ENCODE measurements at regions of chr9 and their contacts with region 1.

Region 1: DNA sequence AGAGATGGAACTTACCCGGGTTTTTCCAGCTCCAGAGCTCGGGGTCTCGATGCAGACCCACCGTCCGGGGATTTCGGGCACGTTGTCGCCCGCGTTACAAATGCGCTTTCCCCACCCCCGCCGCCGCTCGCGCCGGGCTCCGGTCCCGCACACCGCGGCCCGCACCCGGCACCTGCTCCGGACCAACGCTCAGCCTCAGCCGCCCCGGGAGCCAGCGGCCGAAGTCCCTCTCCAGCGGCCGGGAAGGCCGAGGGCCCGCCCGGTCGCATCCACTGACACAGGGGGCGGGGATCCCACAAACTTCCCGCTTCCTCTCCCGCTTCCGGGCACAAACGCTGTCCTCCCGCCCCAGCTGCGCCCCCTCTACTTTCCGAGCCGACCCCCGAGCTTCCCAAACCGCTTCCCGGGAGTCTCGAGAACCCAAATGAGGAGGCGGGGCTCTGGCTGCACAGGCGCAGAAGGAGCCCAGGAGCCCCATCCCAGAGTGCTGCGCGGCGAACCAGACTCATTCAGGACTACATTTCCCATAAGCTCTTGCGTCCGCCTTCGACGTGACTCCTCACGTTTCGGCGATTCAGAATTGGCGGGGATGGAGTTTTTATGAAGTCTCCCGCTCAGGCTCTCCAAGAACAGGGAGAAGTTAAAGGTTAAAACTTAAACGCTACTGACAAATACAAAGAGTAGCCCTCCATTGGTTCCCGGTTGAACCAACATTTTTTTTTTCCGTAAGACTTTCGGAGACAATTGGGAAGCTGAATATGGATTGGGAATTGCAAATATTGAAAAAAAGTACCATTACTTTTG is at the start of gene ZNF782:
- DNase-seq: peak; percentile 62 to 93 (median 83)
- ATAC-seq: peak; percentile 79
- H3K4me3 ChIP-seq: peak within 1 kb of the TSS; percentile 91 to 97
- H3K4me3 Mint-ChIP-seq: peak within 1 kb of the TSS; percentile 100
- H3K27ac ChIP-seq: peak within 1 kb of the TSS; percentile 52 to 74
- H3K27ac Mint-ChIP-seq: peak within 1 kb of the TSS; percentile 99
- H3K4me1 ChIP-seq: peaks cover 29% of the 10 kb centered on the region
- H3K4me1 Mint-ChIP-seq: peaks cover 52% of the 10 kb centered on the region
- H3K27me3 ChIP-seq: no peaks in the 10 kb centered on the region
- H3K27me3 Mint-ChIP-seq: peaks cover 4% of the 10 kb centered on the region
- CTCF ChIP-seq: no peak
- total RNA-seq, gene ZNF782: 2.6 to 3.6 TPM

Region 2: DNA sequence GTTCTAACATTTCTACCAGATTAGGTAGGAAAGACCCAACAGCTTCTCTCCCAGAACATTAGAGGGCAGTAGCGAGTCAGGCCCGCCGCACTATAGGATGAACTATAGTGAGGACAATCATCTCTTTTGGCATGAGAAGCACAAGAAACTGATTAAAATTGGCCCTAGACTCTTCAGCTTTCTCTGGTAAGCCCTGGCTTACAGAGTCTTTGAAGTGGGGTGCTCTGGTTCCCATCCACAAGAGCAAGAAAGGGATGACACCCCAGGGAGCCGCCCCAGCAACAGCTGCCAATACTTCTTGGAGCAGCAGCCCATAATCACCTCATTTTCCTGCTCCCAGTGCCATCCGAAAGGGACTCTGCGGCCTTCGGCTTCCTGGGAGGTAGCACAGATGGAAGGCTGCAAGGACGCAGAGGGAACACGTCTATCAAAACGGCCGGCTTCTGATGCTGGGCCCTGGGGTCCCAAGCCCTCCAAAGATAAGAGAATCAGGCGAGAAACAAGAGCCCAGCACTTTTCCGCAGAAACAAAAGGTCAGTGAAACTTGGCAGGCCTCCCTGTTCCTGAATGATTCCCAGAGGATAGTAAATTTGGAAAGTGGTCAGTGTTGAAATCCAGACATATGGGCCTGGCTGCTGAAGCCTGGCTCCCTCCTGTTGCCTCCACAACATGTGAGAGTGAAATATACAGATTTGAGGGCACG is 621.6 kb before region 1 on chr9:
- CTCF ChIA-PET with region 1: no interaction called
- POLR2A ChIA-PET with region 1: no interaction called
- intact Hi-C with region 1: no loop called
- DNase-seq: peak in 5 of 9 experiments; percentile 20 to 57 (median 32)
- ATAC-seq: peak; percentile 49
- H3K4me3 ChIP-seq: no peak overlapping the region
- H3K4me3 Mint-ChIP-seq: no peak overlapping the region
- H3K27ac ChIP-seq: no peak overlapping the region
- H3K27ac Mint-ChIP-seq: no peak overlapping the region
- H3K4me1 ChIP-seq: no peaks in the 10 kb centered on the region
- H3K4me1 Mint-ChIP-seq: no peaks in the 10 kb centered on the region
- H3K27me3 ChIP-seq: peaks cover 0 to 6% of the 10 kb centered on the region in 2 experiments
- H3K27me3 Mint-ChIP-seq: peaks cover 44% of the 10 kb centered on the region
- CTCF ChIP-seq: peak; percentile 77

Region 3: GRCh38 chr9:96777426-96777864 is 76.8 kb before region 1 on chr9:
- CTCF ChIA-PET with region 1: interaction called, 3 read pairs
- POLR2A ChIA-PET with region 1: interaction called, 6 read pairs
- intact Hi-C with region 1: loop called (anchors 1 kb)
- DNase-seq: no peak
- ATAC-seq: no peak
- H3K4me3 ChIP-seq: peak overlapping the region; percentile 54 to 70
- H3K4me3 Mint-ChIP-seq: peak overlapping the region; percentile 97
- H3K27ac ChIP-seq: peak overlapping the region; percentile 76 to 77
- H3K27ac Mint-ChIP-seq: peak overlapping the region; percentile 99
- H3K4me1 ChIP-seq: peaks cover 14% of the 10 kb centered on the region
- H3K4me1 Mint-ChIP-seq: peaks cover 52% of the 10 kb centered on the region
- H3K27me3 ChIP-seq: no peaks in the 10 kb centered on the region
- H3K27me3 Mint-ChIP-seq: no peaks in the 10 kb centered on the region
- CTCF ChIP-seq: no peak

Region 4: DNA sequence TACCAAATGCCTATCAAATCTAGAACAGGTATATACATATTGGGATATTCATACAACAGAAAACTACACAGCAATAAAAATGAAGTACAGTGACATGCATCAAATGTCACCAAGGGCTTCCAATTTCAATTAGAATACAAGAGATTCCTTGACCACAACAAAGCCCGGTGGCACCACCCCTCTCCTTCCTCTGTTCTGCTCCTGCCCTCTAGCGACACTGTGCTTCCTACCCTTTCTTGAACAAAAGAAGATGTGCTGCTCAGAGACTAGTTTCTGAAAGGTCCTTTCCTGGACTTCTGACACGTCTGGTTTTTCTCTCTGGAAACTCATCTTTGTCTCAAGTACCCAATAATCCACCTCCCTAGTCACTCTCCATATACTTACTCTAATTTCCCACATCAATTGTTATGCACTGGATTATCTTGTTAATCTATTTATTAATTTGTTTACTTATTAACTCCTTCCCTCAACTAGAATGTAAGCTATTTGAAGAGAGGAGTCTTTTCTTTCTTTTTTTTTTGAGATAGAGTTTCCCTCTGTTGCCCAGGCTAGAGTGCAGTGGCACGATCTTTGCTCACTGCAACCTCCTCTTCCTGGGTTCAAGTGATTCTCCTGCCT is 255.0 kb after region 1 on chr9:
- CTCF ChIA-PET with region 1: no interaction called
- POLR2A ChIA-PET with region 1: no interaction called
- intact Hi-C with region 1: loop called in 1 of 2 experiments (anchors 2 kb)
- DNase-seq: peak in 4 of 9 experiments; percentile 21 to 33 (median 23)
- ATAC-seq: no peak
- H3K4me3 ChIP-seq: no peak overlapping the region
- H3K4me3 Mint-ChIP-seq: no peak overlapping the region
- H3K27ac ChIP-seq: no peak overlapping the region
- H3K27ac Mint-ChIP-seq: no peak overlapping the region
- H3K4me1 ChIP-seq: no peaks in the 10 kb centered on the region
- H3K4me1 Mint-ChIP-seq: no peaks in the 10 kb centered on the region
- H3K27me3 ChIP-seq: no peaks in the 10 kb centered on the region
- H3K27me3 Mint-ChIP-seq: peaks cover 4% of the 10 kb centered on the region
- CTCF ChIP-seq: no peak

Region 5: GRCh38 chr9:97140566-97140965 is 286.3 kb after region 1 on chr9:
- CTCF ChIA-PET with region 1: no interaction called
- POLR2A ChIA-PET with region 1: no interaction called
- intact Hi-C with region 1: no loop called
- DNase-seq: no peak
- ATAC-seq: no peak
- H3K4me3 ChIP-seq: no peak overlapping the region
- H3K4me3 Mint-ChIP-seq: no peak overlapping the region
- H3K27ac ChIP-seq: no peak overlapping the region
- H3K27ac Mint-ChIP-seq: no peak overlapping the region
- H3K4me1 ChIP-seq: no peaks in the 10 kb centered on the region
- H3K4me1 Mint-ChIP-seq: no peaks in the 10 kb centered on the region
- H3K27me3 ChIP-seq: no peaks in the 10 kb centered on the region
- H3K27me3 Mint-ChIP-seq: no peaks in the 10 kb centered on the region
- CTCF ChIP-seq: no peak

Region 6: DNA sequence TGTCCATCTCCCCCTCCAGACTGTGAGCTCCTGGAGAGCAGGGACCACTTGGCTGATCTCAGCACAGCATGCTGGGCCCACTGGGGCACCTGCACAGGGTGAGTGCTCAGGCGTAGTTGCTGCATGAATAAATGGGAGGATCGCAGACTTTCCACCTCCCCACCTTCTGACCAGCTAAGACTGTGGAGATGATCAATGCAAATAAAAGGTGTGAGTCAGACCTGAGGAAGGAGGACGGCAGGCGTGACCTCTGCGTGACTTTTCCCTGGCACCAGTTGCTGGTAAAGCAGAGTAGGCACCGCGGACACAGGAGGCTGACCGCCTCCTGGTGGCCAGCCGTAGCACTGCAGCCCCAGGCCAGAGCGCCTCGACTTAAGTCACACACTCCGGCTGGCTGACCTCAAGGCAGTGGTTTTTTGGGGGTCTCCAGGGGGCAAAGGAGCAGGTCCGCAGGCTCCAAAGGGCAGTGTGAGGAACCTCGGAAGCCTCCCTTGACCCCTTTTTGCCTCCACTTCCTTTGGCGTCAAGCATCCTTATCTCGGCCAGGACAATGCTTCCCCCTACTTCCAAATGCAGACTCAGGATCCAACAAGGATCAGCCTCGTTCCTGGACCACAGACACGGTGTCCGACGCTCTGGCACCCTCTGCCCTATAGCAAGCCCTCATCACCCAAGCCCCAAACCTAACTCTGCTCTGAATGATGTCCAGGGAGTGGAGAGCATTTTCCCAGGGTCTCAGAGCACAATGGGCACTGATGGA is 544.9 kb after region 1 on chr9:
- CTCF ChIA-PET with region 1: interaction called, 87 read pairs
- POLR2A ChIA-PET with region 1: no interaction called
- intact Hi-C with region 1: loop called in 1 of 2 experiments (anchors 1 kb)
- DNase-seq: peak; percentile 37 to 77 (median 68)
- ATAC-seq: peak; percentile 89
- H3K4me3 ChIP-seq: no peak overlapping the region
- H3K4me3 Mint-ChIP-seq: no peak overlapping the region
- H3K27ac ChIP-seq: no peak overlapping the region
- H3K27ac Mint-ChIP-seq: no peak overlapping the region
- H3K4me1 ChIP-seq: no peaks in the 10 kb centered on the region
- H3K4me1 Mint-ChIP-seq: no peaks in the 10 kb centered on the region
- H3K27me3 ChIP-seq: no peaks in the 10 kb centered on the region
- H3K27me3 Mint-ChIP-seq: peaks cover 2% of the 10 kb centered on the region
- CTCF ChIP-seq: peak; percentile 98

Region 7: DNA sequence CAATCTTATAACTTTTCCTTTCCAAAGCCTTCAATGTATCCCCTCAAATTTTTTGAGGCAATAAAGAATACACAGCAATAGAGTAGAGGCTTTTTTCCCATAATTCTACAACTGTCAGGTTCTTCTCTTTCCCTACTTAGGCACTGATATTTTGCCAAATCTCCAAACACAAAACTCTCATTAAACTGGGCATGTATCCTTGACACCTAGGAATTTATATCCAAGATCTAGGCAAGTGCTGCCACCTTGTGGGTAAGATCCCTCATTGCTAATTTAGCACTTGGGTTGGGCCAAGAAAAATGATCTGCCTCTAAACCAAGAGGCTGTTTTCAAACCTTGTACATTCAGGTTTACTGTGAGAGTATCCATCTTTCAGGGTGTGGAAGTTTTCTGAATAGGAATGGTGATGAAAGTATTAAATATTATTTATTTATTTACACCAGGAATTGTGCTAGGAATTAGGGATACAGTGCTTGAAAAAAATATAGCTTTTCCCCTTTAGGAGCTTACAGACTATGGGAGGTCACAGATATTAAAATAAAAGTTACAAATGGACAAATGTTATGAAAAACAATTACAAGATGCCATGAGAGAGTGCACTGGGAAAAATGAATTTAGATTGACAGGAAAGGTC is 761.3 kb after region 1 on chr9:
- CTCF ChIA-PET with region 1: interaction called, 23 read pairs
- POLR2A ChIA-PET with region 1: no interaction called
- intact Hi-C with region 1: loop called (anchors 1 kb)
- DNase-seq: peak in 8 of 9 experiments; percentile 22 to 74 (median 58)
- ATAC-seq: peak; percentile 67
- H3K4me3 ChIP-seq: no peak overlapping the region
- H3K4me3 Mint-ChIP-seq: no peak overlapping the region
- H3K27ac ChIP-seq: no peak overlapping the region
- H3K27ac Mint-ChIP-seq: no peak overlapping the region
- H3K4me1 ChIP-seq: no peaks in the 10 kb centered on the region
- H3K4me1 Mint-ChIP-seq: peaks cover 2% of the 10 kb centered on the region
- H3K27me3 ChIP-seq: no peaks in the 10 kb centered on the region
- H3K27me3 Mint-ChIP-seq: no peaks in the 10 kb centered on the region
- CTCF ChIP-seq: peak; percentile 97